ENCODE measurements at regions of chr1 and their contacts with region 1.

Region 1: DNA sequence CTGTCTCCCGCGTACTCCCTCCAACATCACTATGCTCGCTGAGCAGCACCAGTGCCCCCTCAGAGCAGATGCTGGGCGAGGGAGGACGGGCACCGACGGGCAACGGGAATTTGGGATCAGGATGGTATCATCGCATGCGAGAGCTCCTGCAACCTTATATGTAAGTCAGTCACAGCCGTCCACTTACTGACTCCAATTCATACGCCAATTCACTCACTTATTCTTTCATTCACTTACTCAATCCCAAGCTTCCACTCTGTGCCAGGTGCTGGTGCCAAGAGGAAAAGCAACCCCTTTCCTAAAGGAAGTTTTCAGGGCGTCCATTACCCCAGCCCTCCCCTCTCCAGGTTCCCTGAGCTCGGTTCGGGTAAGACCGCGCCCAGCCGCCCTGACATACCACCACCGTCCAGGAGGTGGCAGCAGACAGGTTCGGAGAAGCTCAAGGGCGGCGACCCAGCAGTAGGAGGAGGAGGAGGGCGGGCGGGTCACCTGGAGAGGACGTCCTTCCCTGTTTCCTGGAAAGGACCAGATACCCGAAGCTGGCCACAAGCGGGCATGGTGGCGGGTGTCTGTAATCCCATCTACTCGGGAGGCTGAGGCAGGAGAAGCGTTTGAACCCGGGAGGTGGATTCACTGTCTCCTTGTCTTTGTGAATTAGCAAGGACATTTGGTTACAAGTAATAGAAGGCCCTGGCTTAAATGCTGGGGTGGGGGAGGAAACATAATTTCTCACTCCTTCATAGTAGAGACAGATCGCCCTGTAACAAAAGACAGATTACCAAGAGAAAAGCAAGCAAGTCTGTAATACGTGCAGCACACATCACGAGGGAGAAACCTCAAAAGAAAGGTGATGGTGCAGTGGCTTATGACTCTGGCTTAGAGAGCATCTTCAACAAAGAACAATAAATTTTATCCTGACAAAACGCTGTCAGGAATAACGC is 7.6 kb upstream of the IL22RA1 start:
- DNase-seq: peak; percentile 79
- H3K27ac ChIP-seq: peak overlapping the region; percentile 89
- CTCF ChIP-seq: peak; percentile 95

Region 2: GRCh38 chr1:24085546-24085945 is 65.0 kb before region 1 on chr1:
- CTCF ChIA-PET with region 1: no interaction called
- POLR2A ChIA-PET with region 1: no interaction called
- DNase-seq: no peak
- H3K27ac ChIP-seq: no peak overlapping the region
- CTCF ChIP-seq: no peak

Region 3: DNA sequence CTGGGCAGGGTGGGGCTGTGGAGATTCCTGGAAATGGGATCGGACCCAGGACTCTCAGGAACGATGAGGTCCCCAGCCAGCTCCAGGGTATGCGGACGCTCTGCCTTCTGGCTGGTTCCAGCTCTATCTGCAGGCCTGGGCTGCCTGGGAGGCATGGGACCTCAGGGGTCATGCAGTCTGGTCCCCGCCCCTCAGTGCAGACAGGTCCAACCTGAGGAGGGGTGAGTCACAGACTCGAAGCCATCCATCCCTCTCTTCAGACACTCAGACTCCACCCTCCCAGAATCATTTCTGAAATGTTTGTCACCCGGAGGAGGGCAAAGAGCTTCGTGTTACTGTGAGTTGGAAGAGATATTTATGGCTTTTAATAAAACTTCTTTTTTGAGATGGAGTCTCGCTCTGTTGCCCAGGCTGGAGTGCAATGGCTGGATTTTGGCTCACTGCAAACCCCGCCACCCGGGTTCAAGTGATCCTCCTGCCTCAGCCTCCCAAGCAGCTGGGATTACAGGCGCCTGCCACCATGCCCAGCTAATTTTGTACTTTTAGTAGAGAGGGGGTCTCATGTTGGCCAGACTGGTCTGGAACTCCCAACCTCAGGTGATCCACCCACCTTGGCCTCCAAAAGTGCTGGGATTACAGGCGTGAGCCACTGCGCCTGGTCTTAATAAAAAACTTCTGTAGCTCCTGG is 32.6 kb before region 1 on chr1:
- CTCF ChIA-PET with region 1: interaction called, 15 read pairs
- POLR2A ChIA-PET with region 1: no interaction called
- DNase-seq: peak; percentile 89
- H3K27ac ChIP-seq: peak overlapping the region; percentile 98
- CTCF ChIP-seq: no peak

Region 4: DNA sequence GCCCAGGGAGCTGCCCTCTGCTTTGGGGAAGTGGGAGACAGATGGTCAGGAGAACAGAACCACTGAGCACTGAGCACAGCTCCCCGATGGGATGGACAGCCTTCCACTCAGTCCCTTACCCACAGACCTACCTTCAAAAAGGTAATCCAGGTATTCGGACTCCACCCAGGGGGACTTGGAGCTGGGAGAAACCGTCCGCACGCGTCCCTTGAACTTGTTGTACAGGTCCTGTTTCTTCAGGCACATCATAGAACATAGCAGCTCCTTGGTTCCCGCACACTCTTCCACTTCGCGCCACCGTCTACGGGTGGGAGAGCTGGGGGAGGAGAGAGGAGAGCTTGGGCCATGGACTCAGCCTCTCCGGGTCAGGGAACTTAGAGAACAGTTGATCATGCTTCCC is 18.8 kb after region 1 on chr1:
- CTCF ChIA-PET with region 1: interaction called, 10 read pairs
- POLR2A ChIA-PET with region 1: no interaction called
- DNase-seq: no peak
- H3K27ac ChIP-seq: no peak overlapping the region
- CTCF ChIP-seq: no peak

Region 5: GRCh38 chr1:24186993-24187805 is 36.7 kb after region 1 on chr1 and contains the start of gene IFNLR1:
- CTCF ChIA-PET with region 1: interaction called, 10 read pairs
- POLR2A ChIA-PET with region 1: interaction called, 7 read pairs
- DNase-seq: peak; percentile 66
- H3K27ac ChIP-seq: peak within 1 kb of the TSS; percentile 77
- CTCF ChIP-seq: no peak

Region 6: GRCh38 chr1:24201941-24202440 is 51.5 kb after region 1 on chr1:
- CTCF ChIA-PET with region 1: interaction called, 28 read pairs
- POLR2A ChIA-PET with region 1: no interaction called
- DNase-seq: peak; percentile 74
- H3K27ac ChIP-seq: peak overlapping the region; percentile 75
- CTCF ChIP-seq: peak; percentile 73